HEK293 (cell line): ENCODE measurements at regions of chr5 and their contacts with region 1.

Region 1: GRCh38 chr5:42745426-42745825 is 11.2 kb upstream of the CCDC152 start:
- H3K4me3 ChIP-seq: no peak overlapping the region
- H3K27ac ChIP-seq: no peak overlapping the region
- H3K4me1 ChIP-seq: no peaks in the 10 kb centered on the region
- CTCF ChIP-seq: 0 out of 2 replicates have a peak, but pooled peaks have one; percentile 11

Region 2: GRCh38 chr5:42718591-42718990 is 26.8 kb before region 1 on chr5:
- CTCF ChIA-PET with region 1: interaction called, 11 read pairs
- POLR2A ChIA-PET with region 1: no interaction called
- H3K4me3 ChIP-seq: no peak overlapping the region
- H3K27ac ChIP-seq: no peak overlapping the region
- H3K4me1 ChIP-seq: no peaks in the 10 kb centered on the region
- CTCF ChIP-seq: no peak